A549 (cell line): ENCODE measurements at regions of chr1 and their contacts with region 1.

Region 1: DNA sequence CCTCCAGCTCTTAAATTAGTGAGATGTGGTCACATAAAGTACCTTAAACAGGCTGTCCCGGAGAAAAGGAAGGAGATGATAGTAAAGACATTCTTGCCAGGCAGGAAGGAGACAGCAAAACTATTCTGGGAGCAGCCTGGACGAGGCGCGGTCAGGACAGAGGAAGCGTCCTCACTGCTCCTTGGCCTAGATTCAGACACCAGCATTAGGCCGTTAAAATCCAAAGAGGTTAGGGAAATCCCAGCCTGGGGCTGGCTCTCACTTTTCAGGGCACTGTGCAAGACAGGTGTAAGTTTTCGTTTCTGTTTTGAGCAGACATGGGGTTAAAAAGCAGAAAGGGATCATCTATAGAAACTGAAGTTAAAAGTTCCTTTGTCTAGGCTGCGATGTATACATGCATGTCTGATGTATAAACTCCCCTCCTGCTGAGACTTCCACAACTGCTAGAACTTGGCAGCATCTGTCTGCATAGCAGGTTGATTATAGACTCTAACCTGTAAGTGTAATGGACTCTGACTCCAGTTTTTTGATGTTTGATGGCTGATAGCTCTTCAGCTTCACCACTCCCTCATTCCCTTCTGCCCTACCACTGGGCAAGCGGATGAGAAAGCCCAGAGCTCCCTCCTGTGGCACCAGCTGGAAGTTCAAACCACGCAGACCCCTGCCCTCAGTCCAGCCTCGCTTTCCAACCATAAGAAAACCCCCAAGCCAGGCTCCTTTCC is 21.5 kb downstream of the STPG1 start:
- DNase-seq: peak; percentile 59 to 63
- ATAC-seq: peak; percentile 85 to 91
- H3K4me3 ChIP-seq: no peak overlapping the region
- H3K27ac ChIP-seq: peak overlapping the region; percentile 56 to 81; a peak in 5 of 6 replicates
- H3K4me1 ChIP-seq: peaks cover 55% of the 10 kb centered on the region
- CTCF ChIP-seq: peak; percentile 76
- EP300 ChIP-seq: no peak
- POLR2A ChIP-seq: no peak
- RAD21 ChIP-seq: peak; percentile 85 to 89

Region 2: DNA sequence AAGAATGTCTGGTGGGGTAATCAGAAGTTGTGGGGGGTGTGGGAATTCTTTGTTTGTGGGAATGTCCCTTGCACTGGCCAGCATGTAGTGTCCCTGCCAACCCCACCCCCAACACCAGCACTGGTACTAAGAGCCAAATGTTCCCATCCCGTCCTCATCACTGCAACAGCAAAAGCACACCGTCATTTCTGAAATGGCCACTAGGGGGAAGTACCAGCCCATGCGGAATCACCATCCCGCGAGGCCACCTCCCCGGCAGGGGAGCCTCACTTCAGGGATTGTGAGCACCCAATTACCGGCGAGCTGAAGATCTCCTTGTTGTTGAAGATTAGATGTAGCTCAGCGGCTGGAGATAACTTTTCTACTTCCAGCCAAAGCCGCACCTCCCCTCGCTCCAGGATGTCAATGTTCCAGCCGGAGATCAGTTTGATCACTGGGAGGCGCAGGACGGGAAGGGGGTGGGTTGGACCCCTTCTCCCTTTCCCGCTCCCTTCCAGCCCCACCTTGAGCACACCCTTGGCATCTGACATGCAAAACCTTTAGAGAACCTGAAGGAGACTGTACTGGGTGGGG is 321.1 kb before region 1 on chr1:
- CTCF ChIA-PET with region 1: interaction called, 30 read pairs
- POLR2A ChIA-PET with region 1: no interaction called
- DNase-seq: peak; percentile 79 to 86
- ATAC-seq: peak; percentile 95 to 97
- H3K4me3 ChIP-seq: no peak overlapping the region
- H3K27ac ChIP-seq: peak overlapping the region; percentile 43 to 54; a peak in 3 of 6 replicates
- H3K4me1 ChIP-seq: peaks cover 8% of the 10 kb centered on the region; the same call in 2 of the 3 replicates
- CTCF ChIP-seq: peak; percentile 73
- EP300 ChIP-seq: no peak
- POLR2A ChIP-seq: no peak
- RAD21 ChIP-seq: peak; percentile 83 to 84

Region 3: DNA sequence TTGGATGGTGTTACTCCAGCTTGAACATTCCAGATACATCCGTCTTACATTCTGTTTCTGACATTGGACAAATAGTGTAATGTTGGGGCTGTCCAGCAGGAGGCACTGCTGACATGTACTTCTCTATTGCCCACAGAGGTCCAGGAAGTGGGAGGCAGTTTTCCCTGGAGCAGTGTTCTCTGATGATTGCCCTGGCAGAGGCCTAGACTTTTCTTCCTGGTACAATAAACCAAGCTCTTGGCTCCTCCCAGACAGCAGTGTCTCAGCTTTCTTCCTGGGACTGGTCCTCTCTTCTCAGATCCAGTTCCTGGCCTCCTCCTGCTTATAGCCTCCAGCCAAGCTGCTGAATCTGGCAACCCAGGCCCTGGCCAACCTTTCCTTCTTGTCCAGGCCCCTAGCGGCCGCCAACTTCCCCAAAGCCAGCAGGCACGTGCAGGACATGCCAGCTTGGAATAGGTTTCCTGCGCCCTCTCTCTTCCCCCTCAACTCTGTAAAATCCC is 190.1 kb before region 1 on chr1:
- CTCF ChIA-PET with region 1: interaction called, 748 read pairs
- POLR2A ChIA-PET with region 1: interaction called, 10 read pairs
- DNase-seq: peak; percentile 62 to 91
- ATAC-seq: peak; percentile 85 to 94
- H3K4me3 ChIP-seq: no peak overlapping the region
- H3K27ac ChIP-seq: peak overlapping the region; percentile 84 to 86
- H3K4me1 ChIP-seq: peaks cover 22% of the 10 kb centered on the region
- CTCF ChIP-seq: peak; percentile 91
- EP300 ChIP-seq: no peak
- POLR2A ChIP-seq: no peak
- RAD21 ChIP-seq: peak; percentile 95 to 96

Region 4: DNA sequence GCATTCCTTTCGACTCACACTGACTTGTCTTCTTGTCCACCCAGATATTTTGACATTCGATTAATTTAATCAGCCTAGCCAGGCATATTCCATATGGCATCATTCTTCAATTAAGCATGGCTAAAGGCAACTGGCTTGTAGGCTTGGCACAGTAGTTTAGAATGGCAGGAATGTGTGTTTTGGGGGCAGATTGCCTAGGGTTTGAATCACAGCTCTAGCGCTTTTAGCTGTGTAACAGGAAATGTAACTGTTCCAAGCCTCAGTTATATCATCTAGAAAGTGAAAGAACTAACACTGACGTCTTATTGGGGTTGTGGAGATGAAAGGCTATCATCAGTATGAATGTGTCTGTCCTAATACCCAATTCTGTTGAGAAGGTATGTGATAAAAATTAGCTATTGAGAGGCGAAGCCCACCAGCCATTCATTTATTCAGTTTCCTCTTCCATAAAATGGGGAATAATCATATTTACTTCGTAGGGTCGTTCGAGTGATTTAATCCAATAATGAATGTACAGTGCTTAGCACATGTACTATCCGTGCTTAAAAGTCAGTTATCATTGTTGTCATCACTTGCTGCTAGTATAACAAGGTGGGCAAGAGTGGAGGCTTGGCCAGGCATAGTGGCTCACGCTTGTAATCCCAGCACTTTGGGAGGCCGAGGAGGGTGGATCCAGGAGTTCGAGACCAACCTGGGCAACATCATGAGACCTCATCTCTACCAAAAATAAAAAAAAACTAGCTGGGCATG is 114.4 kb before region 1 on chr1:
- CTCF ChIA-PET with region 1: interaction called, 12 read pairs
- POLR2A ChIA-PET with region 1: no interaction called
- DNase-seq: no peak
- ATAC-seq: no peak; a peak in 1 of 6 replicates
- H3K4me3 ChIP-seq: no peak overlapping the region
- H3K27ac ChIP-seq: peak overlapping the region in 1 of 2 experiments; percentile 19; a peak in 1 of 6 replicates
- H3K4me1 ChIP-seq: peaks cover under 1% of the 10 kb centered on the region; the same call in 2 of the 3 replicates
- CTCF ChIP-seq: no peak
- EP300 ChIP-seq: no peak
- POLR2A ChIP-seq: no peak
- RAD21 ChIP-seq: no peak

Region 5: GRCh38 chr1:24308365-24309015 is 83.6 kb before region 1 on chr1:
- CTCF ChIA-PET with region 1: interaction called, 19 read pairs
- POLR2A ChIA-PET with region 1: no interaction called
- DNase-seq: peak in 1 of 2 experiments; percentile 53
- ATAC-seq: peak; percentile 56 to 85; a peak in 3 of 6 replicates
- H3K4me3 ChIP-seq: no peak overlapping the region
- H3K27ac ChIP-seq: peak overlapping the region; percentile 5 to 60; a peak in 4 of 6 replicates
- H3K4me1 ChIP-seq: peaks cover 5% of the 10 kb centered on the region; the same call in 2 of the 3 replicates
- CTCF ChIP-seq: no peak
- EP300 ChIP-seq: no peak
- POLR2A ChIP-seq: no peak
- RAD21 ChIP-seq: peak; percentile 33 to 42; a peak in 2 of 5 replicates

Region 6: DNA sequence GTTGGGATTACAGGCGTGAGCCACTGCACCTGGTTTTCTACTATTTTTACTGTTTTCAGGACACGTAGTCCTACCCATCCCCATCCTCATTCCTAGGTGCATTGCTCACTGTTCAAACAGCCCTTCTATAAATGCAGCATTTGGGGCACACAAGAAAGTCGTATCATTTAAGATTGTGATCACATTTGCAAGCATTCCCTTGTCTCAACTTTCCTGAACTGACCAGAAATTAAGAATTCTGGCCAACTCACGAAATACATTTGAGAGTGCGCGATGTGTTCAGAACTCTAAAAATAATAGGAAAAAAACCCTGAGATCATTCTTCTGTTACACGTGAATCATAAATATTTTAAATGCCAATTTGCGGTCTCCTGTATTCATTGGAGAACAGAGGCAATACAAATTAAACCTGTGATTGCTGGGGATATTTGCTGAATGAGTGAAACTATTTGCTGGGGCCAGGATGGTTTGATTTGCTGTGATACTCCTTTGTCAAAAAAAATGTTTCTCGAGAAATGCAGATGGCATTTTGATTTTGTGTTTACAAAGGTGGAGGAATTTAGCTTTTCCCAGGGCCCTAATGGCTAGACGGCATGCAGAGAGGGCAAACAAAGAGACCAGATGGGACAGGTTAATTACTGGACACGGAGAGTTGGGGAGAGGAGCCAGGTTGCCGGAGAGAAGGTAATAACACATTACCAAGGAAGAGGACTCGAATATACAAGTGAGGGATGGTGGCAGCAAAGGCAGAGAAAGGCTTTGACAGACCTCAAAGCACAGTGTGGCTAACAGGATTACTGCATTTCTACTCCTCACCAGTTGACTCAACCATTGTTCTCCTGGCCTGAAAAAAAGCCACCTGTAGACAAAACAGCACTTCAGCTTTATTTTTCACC is 16.9 kb before region 1 on chr1:
- CTCF ChIA-PET with region 1: interaction called, 23 read pairs
- POLR2A ChIA-PET with region 1: no interaction called
- DNase-seq: peak in 1 of 2 experiments; percentile 82
- ATAC-seq: peak; percentile 79 to 87; a peak in 5 of 6 replicates
- H3K4me3 ChIP-seq: no peak overlapping the region
- H3K27ac ChIP-seq: peak overlapping the region; percentile 81 to 83
- H3K4me1 ChIP-seq: peaks cover 24% of the 10 kb centered on the region
- CTCF ChIP-seq: no peak
- EP300 ChIP-seq: peak in 1 of 2 experiments; percentile 30; a peak in 1 of 5 replicates
- POLR2A ChIP-seq: no peak
- RAD21 ChIP-seq: 0 out of 5 replicates have a peak, but pooled peaks of 1 of the 2 experiments have one; percentile 4

Region 7: DNA sequence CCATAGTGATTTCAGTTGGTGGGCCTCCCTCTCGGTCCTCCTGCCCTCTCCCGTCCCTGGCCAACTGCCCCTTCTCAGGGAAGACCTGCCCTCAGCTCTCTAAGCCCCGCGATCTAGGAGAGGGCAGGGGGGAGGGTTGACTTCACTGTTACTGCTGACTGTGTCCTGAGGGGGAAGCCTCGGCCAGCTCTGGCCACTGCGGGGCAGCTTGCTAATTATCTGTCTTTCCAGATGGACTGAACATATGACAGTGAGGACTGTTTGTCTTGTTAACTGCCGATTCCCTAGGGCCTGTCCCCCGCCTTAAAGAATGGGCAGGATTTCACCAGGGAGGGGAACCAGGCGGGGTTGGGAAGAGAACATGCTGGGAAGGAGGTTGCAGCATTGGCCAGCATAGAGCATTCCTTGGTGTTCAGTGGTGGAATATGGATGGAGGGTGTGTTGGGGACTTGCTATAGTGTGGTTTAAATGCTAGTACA is 46.4 kb after region 1 on chr1:
- CTCF ChIA-PET with region 1: no interaction called
- POLR2A ChIA-PET with region 1: no interaction called
- DNase-seq: no peak
- ATAC-seq: no peak
- H3K4me3 ChIP-seq: no peak overlapping the region
- H3K27ac ChIP-seq: no peak overlapping the region
- H3K4me1 ChIP-seq: no peaks in the 10 kb centered on the region
- CTCF ChIP-seq: no peak
- EP300 ChIP-seq: no peak
- POLR2A ChIP-seq: no peak
- RAD21 ChIP-seq: no peak

Region 8: GRCh38 chr1:24468685-24469316 is 76.8 kb after region 1 on chr1:
- CTCF ChIA-PET with region 1: no interaction called
- POLR2A ChIA-PET with region 1: no interaction called
- DNase-seq: no peak
- ATAC-seq: no peak
- H3K4me3 ChIP-seq: no peak overlapping the region
- H3K27ac ChIP-seq: no peak overlapping the region
- H3K4me1 ChIP-seq: no peaks in the 10 kb centered on the region
- CTCF ChIP-seq: no peak
- EP300 ChIP-seq: no peak
- POLR2A ChIP-seq: no peak
- RAD21 ChIP-seq: no peak

Region 9: GRCh38 chr1:24744911-24745710 is 353.1 kb after region 1 on chr1 and contains the start of gene CLIC4:
- CTCF ChIA-PET with region 1: no interaction called
- POLR2A ChIA-PET with region 1: no interaction called
- DNase-seq: peak; percentile 75 to 98
- ATAC-seq: peak; percentile 91 to 96
- H3K4me3 ChIP-seq: peak within 1 kb of the TSS; percentile 63
- H3K27ac ChIP-seq: peak within 1 kb of the TSS; percentile 88 to 96
- H3K4me1 ChIP-seq: peaks cover 16% of the 10 kb centered on the region; the same call in 2 of the 3 replicates
- CTCF ChIP-seq: no peak
- EP300 ChIP-seq: no peak
- POLR2A ChIP-seq: peak; percentile 94
- RAD21 ChIP-seq: peak in 1 of 2 experiments; percentile 15; a peak in 2 of 5 replicates
- polyA plus RNA-seq, gene CLIC4: 85.4 and 97.4 TPM in 2 replicates

Region 10: GRCh38 chr1:25148673-25149300 is 756.7 kb after region 1 on chr1:
- CTCF ChIA-PET with region 1: no interaction called
- POLR2A ChIA-PET with region 1: no interaction called
- DNase-seq: peak in 1 of 2 experiments; percentile 23
- ATAC-seq: peak in 1 of 2 experiments; percentile 47; a peak in 2 of 6 replicates
- H3K4me3 ChIP-seq: no peak overlapping the region
- H3K27ac ChIP-seq: no peak overlapping the region
- H3K4me1 ChIP-seq: no peaks in the 10 kb centered on the region
- CTCF ChIP-seq: peak; percentile 26
- EP300 ChIP-seq: no peak
- POLR2A ChIP-seq: no peak
- RAD21 ChIP-seq: peak in 1 of 2 experiments; percentile 19; a peak in 2 of 5 replicates